HAP-1 (cell line): ENCODE measurements at regions of chr10 and their contacts with region 1.

Region 1: GRCh38 chr10:78047314-78047891 is 13.7 kb downstream of the RPS24 start:
- DNase-seq: peak; percentile 77 to 93
- H3K4me3 ChIP-seq: no peak overlapping the region
- H3K4me1 ChIP-seq: no peaks in the 10 kb centered on the region
- H3K27me3 ChIP-seq: no peaks in the 10 kb centered on the region

Region 2: DNA sequence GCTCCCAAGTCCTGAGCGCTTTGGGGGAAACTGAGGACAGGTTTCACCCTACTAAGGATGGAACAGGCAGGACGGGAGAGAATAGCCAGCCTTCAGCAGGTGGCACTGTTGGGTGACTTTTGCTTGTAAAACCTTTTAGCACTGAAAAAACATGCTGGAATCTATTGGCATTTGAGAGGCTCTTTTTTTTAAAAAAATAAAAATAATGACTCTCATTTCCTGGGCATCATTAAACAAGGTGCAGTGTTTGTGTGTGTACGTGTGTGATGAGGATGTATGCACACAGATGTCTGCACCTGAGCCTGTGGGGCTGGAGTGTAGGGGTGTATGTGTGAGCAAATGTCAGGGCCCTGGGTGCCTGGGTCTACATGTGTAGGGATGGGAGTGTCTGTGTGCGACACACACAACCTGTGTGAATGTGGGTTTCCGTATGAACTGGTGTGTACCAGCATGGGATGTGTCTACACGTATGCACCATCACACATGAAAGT is 164.2 kb after region 1 on chr10:
- in situ Hi-C with region 1: no loop called
- DNase-seq: peak in 1 of 2 experiments; percentile 15
- H3K4me3 ChIP-seq: no peak overlapping the region
- H3K4me1 ChIP-seq: no peaks in the 10 kb centered on the region
- H3K27me3 ChIP-seq: peaks cover 3% of the 10 kb centered on the region; the same call in 1 of the 2 replicates

Region 3: GRCh38 chr10:78302989-78303854 is 255.8 kb after region 1 on chr10:
- in situ Hi-C with region 1: loop called (anchors 10 kb)
- DNase-seq: peak; percentile 87 to 96
- H3K4me3 ChIP-seq: peak overlapping the region; percentile 39
- H3K4me1 ChIP-seq: peaks cover 5% of the 10 kb centered on the region; the same call in 1 of the 2 replicates
- H3K27me3 ChIP-seq: 0 out of 2 replicates have a peak, but pooled peaks cover 7% of the 10 kb centered on the region